ENCODE measurements at regions of chr15 and their contacts with region 1.

Region 1: DNA sequence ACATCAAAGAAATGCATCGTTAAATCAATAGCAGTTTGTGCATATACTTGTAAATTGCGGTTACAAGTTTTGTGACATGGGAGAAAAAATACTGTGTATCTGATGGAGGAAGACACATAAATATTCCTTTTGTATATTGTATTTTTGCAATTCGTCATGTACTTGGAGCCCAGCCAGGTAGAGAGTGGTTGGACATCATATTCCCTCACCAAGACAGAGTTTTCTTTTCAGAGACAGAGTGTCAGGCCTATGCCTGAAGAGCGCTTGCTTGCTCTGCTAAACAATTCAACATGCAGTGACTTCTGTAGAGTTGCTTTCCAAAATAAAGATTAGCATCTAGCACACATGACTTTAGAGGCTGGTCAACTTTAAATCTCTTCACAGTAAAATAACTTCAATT is 24.8 kb upstream of the MEIS2 start:
- DNase-seq: peak; percentile 61
- H3K4me3 ChIP-seq: no peak overlapping the region
- H3K27ac ChIP-seq: peak overlapping the region; percentile 39 to 72 (median 58)
- H3K4me1 ChIP-seq: peaks cover 0 to 43% (median 35%) of the 10 kb centered on the region in 4 donors
- H3K27me3 ChIP-seq: no peaks in the 10 kb centered on the region
- CTCF ChIP-seq: no peak
- EP300 ChIP-seq: no peak
- POLR2A ChIP-seq: no peak

Region 2: DNA sequence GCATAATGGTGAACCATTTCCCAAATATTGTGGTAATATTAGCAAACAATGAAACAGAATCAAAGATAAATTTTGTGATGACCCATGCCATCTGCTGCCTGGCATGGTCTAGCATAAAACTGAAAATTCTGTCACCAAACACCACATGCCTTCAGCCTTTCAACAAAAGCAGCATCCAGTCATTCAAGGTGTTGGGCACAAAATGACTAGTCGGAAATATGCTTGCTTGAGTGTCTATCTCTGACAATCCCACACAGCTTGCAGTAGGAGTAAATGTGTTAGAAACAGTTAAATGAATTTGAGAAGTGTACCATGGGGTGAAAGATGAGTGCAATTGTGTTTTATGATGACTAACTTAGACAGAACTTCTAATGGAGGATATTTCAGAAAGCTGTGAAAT is 607.4 kb before region 1 on chr15:
- intact Hi-C with region 1: no loop called
- DNase-seq: no peak
- H3K4me3 ChIP-seq: no peak overlapping the region
- H3K27ac ChIP-seq: no peak overlapping the region
- H3K4me1 ChIP-seq: no peaks in the 10 kb centered on the region
- H3K27me3 ChIP-seq: no peaks in the 10 kb centered on the region
- CTCF ChIP-seq: no peak
- EP300 ChIP-seq: no peak
- POLR2A ChIP-seq: no peak

Region 3: GRCh38 chr15:36591536-36592411 is 533.4 kb before region 1 on chr15:
- intact Hi-C with region 1: loop called (anchors 10 kb)
- DNase-seq: no peak
- H3K4me3 ChIP-seq: no peak overlapping the region
- H3K27ac ChIP-seq: peak overlapping the region in 1 of 4 donors; percentile 16
- H3K4me1 ChIP-seq: peaks cover 0 to 29% (median 18%) of the 10 kb centered on the region in 4 donors
- H3K27me3 ChIP-seq: no peaks in the 10 kb centered on the region
- CTCF ChIP-seq: no peak
- EP300 ChIP-seq: no peak
- POLR2A ChIP-seq: no peak

Region 4: GRCh38 chr15:36810656-36811449 is 314.3 kb before region 1 on chr15:
- intact Hi-C with region 1: loop called (anchors 10 kb)
- DNase-seq: no peak
- H3K4me3 ChIP-seq: no peak overlapping the region
- H3K27ac ChIP-seq: peak overlapping the region; percentile 65 to 76 (median 72)
- H3K4me1 ChIP-seq: peaks cover 0 to 83% (median 65%) of the 10 kb centered on the region in 4 donors
- H3K27me3 ChIP-seq: no peaks in the 10 kb centered on the region
- CTCF ChIP-seq: peak in 2 of 4 experiments; percentile 37 to 44
- EP300 ChIP-seq: peak in 1 of 4 donors; percentile 54
- POLR2A ChIP-seq: no peak

Measured in sigmoid colon (tissue), 7 donors.